Naive thymus-derived CD4-positive, alpha-beta T cell (primary cell): ENCODE measurements at regions of chr17 and their contacts with region 1.

Region 1: GRCh38 chr17:8248751-8249607 is at the start of gene PFAS:
- DNase-seq: peak; percentile 91 to 98 (median 94)
- ATAC-seq: peak; percentile 64
- H3K4me3 ChIP-seq: peak within 1 kb of the TSS; percentile 94
- H3K4me3 Mint-ChIP-seq: peak within 1 kb of the TSS; percentile 92 to 100 (median 99)
- H3K27ac ChIP-seq: peak within 1 kb of the TSS; percentile 100
- H3K27ac Mint-ChIP-seq: peak within 1 kb of the TSS; percentile 97 to 100 (median 100)
- H3K4me1 ChIP-seq: peaks cover 28 to 35% of the 10 kb centered on the region in 2 donors
- H3K4me1 Mint-ChIP-seq: peaks cover 30 to 56% (median 50%) of the 10 kb centered on the region in 7 donors
- H3K27me3 ChIP-seq: no peaks in the 10 kb centered on the region
- H3K27me3 Mint-ChIP-seq: no peaks in the 10 kb centered on the region
- total RNA-seq, gene PFAS: 31.6 to 68.9 (median 31.9) TPM

Region 2: GRCh38 chr17:8118769-8119580 is 130.0 kb before region 1 on chr17:
- CTCF ChIA-PET with region 1: interaction called, 3 read pairs
- POLR2A ChIA-PET with region 1: interaction called, 25 read pairs
- intact Hi-C with region 1: loop called (anchors 1 kb)
- DNase-seq: peak; percentile 78 to 92 (median 90)
- ATAC-seq: peak; percentile 76
- H3K4me3 ChIP-seq: peak overlapping the region; percentile 95
- H3K4me3 Mint-ChIP-seq: peak overlapping the region; percentile 88 to 99 (median 94)
- H3K27ac ChIP-seq: peak overlapping the region; percentile 64
- H3K27ac Mint-ChIP-seq: peak overlapping the region; percentile 94 to 100 (median 99)
- H3K4me1 ChIP-seq: peaks cover 44 to 46% of the 10 kb centered on the region in 2 donors
- H3K4me1 Mint-ChIP-seq: peaks cover 27 to 61% (median 53%) of the 10 kb centered on the region in 7 donors
- H3K27me3 ChIP-seq: peaks cover 0 to 12% of the 10 kb centered on the region in 2 donors
- H3K27me3 Mint-ChIP-seq: peaks cover 9 to 77% (median 45%) of the 10 kb centered on the region in 5 donors

Region 3: GRCh38 chr17:8163978-8164814 is 84.8 kb before region 1 on chr17:
- CTCF ChIA-PET with region 1: interaction called, 4 read pairs
- POLR2A ChIA-PET with region 1: interaction called, 39 read pairs
- intact Hi-C with region 1: loop called in 1 of 2 experiments (anchors 5 kb)
- DNase-seq: peak; percentile 38 to 80 (median 71)
- ATAC-seq: peak; percentile 68
- H3K4me3 ChIP-seq: peak overlapping the region; percentile 72
- H3K4me3 Mint-ChIP-seq: peak overlapping the region; percentile 78 to 94 (median 85)
- H3K27ac ChIP-seq: peak overlapping the region; percentile 100
- H3K27ac Mint-ChIP-seq: peak overlapping the region in 8 of 9 donors; percentile 94 to 99 (median 98)
- H3K4me1 ChIP-seq: peaks cover 35 to 46% of the 10 kb centered on the region in 2 donors
- H3K4me1 Mint-ChIP-seq: peaks cover 45 to 63% (median 55%) of the 10 kb centered on the region in 7 donors
- H3K27me3 ChIP-seq: peaks cover 0 to 3% of the 10 kb centered on the region in 2 donors
- H3K27me3 Mint-ChIP-seq: no peaks in the 10 kb centered on the region

Region 4: GRCh38 chr17:8204761-8205555 is 44.0 kb before region 1 on chr17:
- CTCF ChIA-PET with region 1: no interaction called
- POLR2A ChIA-PET with region 1: interaction called, 17 read pairs
- intact Hi-C with region 1: loop called in 1 of 2 experiments (anchors 5 kb)
- DNase-seq: no peak
- ATAC-seq: no peak
- H3K4me3 ChIP-seq: no peak overlapping the region
- H3K4me3 Mint-ChIP-seq: no peak overlapping the region
- H3K27ac ChIP-seq: no peak overlapping the region
- H3K27ac Mint-ChIP-seq: peak overlapping the region in 1 of 9 donors; percentile 38
- H3K4me1 ChIP-seq: peaks cover 0 to 2% of the 10 kb centered on the region in 2 donors
- H3K4me1 Mint-ChIP-seq: peaks cover 5 to 37% (median 7%) of the 10 kb centered on the region in 7 donors
- H3K27me3 ChIP-seq: no peaks in the 10 kb centered on the region
- H3K27me3 Mint-ChIP-seq: peaks cover 0 to 2% (median 0%) of the 10 kb centered on the region in 5 donors

Region 5: GRCh38 chr17:8237175-8237574 is 11.8 kb before region 1 on chr17:
- CTCF ChIA-PET with region 1: interaction called, 3 read pairs
- POLR2A ChIA-PET with region 1: interaction called, 43 read pairs
- intact Hi-C with region 1: no loop called
- DNase-seq: no peak
- ATAC-seq: no peak
- H3K4me3 ChIP-seq: no peak overlapping the region
- H3K4me3 Mint-ChIP-seq: peak overlapping the region in 1 of 10 donors; percentile 23
- H3K27ac ChIP-seq: no peak overlapping the region
- H3K27ac Mint-ChIP-seq: peak overlapping the region in 3 of 9 donors; percentile 38 to 71 (median 43)
- H3K4me1 ChIP-seq: peaks cover 0 to 9% of the 10 kb centered on the region in 2 donors
- H3K4me1 Mint-ChIP-seq: peaks cover 3 to 59% (median 35%) of the 10 kb centered on the region in 7 donors
- H3K27me3 ChIP-seq: no peaks in the 10 kb centered on the region
- H3K27me3 Mint-ChIP-seq: no peaks in the 10 kb centered on the region

Region 6: DNA sequence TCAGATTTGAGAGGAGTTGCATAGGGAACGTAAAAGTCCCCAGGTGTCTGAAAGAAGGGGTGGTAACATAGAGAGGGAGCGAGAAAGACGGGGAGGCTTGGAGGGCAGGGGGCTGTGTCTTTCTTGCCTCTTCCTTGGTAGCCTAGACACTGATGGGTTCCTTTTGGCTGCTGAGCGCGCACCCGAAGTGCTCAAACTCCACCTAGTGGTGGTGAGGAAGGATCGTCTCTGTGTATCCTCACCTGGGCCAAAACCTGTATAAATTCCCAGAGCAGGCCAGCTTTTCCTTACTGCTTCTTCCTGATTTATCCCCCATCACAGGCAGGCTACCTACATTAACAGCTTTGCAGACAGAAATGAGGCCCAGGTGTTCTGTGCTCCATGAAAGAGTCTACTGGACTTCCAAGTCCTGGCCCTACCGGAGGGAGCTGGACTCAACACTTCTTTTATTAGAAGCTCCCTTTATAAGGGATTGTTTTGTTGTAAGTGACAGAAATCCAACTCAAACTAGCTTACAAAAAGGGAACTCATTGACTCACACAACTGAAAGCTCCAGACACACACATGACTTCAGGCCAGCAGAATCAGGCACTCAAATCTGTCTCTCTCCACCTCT is 51.8 kb after region 1 on chr17:
- CTCF ChIA-PET with region 1: interaction called, 13 read pairs
- POLR2A ChIA-PET with region 1: interaction called, 121 read pairs
- intact Hi-C with region 1: loop called (anchors 1 kb)
- DNase-seq: peak; percentile 33 to 80 (median 72)
- ATAC-seq: peak; percentile 95
- H3K4me3 ChIP-seq: no peak overlapping the region
- H3K4me3 Mint-ChIP-seq: peak overlapping the region in 1 of 10 donors; percentile 14
- H3K27ac ChIP-seq: no peak overlapping the region
- H3K27ac Mint-ChIP-seq: peak overlapping the region in 7 of 9 donors; percentile 6 to 80 (median 71)
- H3K4me1 ChIP-seq: peaks cover 3 to 9% of the 10 kb centered on the region in 2 donors
- H3K4me1 Mint-ChIP-seq: peaks cover 7 to 18% (median 14%) of the 10 kb centered on the region in 7 donors
- H3K27me3 ChIP-seq: no peaks in the 10 kb centered on the region
- H3K27me3 Mint-ChIP-seq: peaks cover 0 to 5% (median 0%) of the 10 kb centered on the region in 5 donors

Region 7: GRCh38 chr17:10087081-10087754 is 1838.2 kb after region 1 on chr17:
- CTCF ChIA-PET with region 1: no interaction called
- POLR2A ChIA-PET with region 1: no interaction called
- intact Hi-C with region 1: no loop called
- DNase-seq: no peak
- ATAC-seq: peak; percentile 42
- H3K4me3 ChIP-seq: no peak overlapping the region
- H3K4me3 Mint-ChIP-seq: no peak overlapping the region
- H3K27ac ChIP-seq: no peak overlapping the region
- H3K27ac Mint-ChIP-seq: no peak overlapping the region
- H3K4me1 ChIP-seq: peaks cover 0 to 9% of the 10 kb centered on the region in 2 donors
- H3K4me1 Mint-ChIP-seq: peaks cover 0 to 9% (median 0%) of the 10 kb centered on the region in 7 donors
- H3K27me3 ChIP-seq: no peaks in the 10 kb centered on the region
- H3K27me3 Mint-ChIP-seq: peaks cover 0 to 4% (median 0%) of the 10 kb centered on the region in 5 donors